Uterus (tissue), 4 donors: ENCODE measurements at regions of chr4 and their contacts with region 1.

Region 1: DNA sequence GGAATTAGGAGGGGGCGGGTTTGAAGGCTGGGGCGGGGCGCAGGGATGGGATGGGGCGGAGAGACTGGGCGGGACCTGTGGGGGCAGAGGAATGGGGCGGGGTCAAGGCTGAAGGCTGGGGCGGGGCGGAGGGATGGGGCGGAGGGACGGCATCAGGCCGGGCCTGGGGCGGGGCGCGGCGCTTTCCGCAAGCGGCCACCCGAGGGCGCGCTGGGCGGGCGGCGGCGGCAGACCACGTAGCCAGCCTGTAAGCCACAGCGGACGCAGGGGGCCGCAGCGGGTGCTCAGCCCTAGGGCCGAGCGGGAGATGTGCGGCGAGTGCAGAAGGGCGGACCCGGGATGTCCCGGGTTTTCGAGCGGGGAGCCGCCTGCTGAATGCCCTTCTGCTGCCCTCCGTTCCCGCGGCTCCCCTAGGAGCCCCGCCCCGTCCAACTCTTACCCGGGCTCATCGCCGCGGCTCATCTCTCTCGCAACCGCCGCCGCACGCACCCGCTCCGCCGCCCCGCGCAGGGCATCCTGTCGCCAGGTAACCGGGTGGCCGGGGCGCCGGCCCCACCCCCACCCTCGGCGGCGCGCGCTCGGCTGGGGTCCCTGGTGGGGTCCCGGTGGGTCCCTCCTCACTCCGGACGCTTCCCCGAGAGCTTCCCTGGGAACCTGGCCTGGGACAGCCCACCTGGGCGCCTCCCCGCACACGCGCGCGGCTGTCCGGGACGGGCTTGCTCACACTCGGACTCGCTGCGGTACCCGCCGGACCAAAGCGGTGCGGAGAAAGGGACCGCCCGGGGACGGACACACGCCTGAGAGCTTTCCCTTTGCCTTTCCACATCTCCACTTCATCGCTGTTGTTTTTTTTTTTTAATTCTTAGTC is at the start of gene CCDC110:
- DNase-seq: peak; percentile 92 to 98
- H3K4me3 ChIP-seq: peak within 1 kb of the TSS; percentile 80 to 83
- H3K27ac ChIP-seq: peak within 1 kb of the TSS; percentile 80 to 81
- H3K4me1 ChIP-seq: no peaks in the 10 kb centered on the region
- H3K27me3 ChIP-seq: no peaks in the 10 kb centered on the region
- CTCF ChIP-seq: peak; percentile 50 to 95 (median 88)
- POLR2A ChIP-seq: peak in 1 of 2 donors; percentile 73
- total RNA-seq, gene CCDC110: 0.29 to 2.6 (median 2.1) TPM in 3 of 4 donors, not detected in the other

Region 2: DNA sequence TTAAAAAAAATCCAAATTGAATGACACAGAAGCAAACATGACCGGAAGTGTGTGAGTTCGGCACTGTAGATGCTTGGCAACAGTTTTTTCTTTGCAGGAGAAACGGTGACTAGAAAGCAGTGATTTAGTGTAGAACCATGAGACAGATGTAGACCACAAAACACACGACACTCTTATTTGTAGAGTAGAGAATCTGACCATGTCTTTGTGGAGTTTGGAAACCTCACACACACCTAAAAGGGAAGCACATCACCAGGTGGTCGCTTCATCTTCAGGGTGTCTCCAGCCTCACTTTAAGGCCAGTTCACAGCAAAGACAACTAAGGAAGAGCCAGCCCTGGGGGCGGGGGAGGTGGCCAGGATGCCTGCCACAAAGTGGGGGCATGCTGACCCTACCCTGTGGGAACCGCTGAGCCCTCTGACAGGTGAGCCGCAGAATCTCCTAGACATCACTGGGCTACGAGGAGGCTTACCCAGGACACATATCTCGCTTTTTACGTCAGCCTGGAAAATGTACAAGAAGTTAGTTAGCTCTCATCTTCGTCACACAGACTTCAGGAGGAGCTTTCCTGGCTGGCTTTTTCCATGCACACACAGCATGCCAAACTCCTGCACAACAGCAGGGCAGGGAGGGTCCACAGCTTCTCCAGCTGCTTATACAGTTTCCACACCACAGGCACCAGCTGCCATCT is 128.2 kb after region 1 on chr4:
- intact Hi-C with region 1: loop called (anchors 5 kb)
- DNase-seq: peak in 1 of 2 donors; percentile 42
- H3K4me3 ChIP-seq: no peak overlapping the region
- H3K27ac ChIP-seq: no peak overlapping the region
- H3K4me1 ChIP-seq: no peaks in the 10 kb centered on the region
- H3K27me3 ChIP-seq: no peaks in the 10 kb centered on the region
- CTCF ChIP-seq: no peak
- POLR2A ChIP-seq: no peak